Transverse colon (tissue), 4 donors: ENCODE measurements at regions of chr2 and their contacts with region 1.

Region 1: DNA sequence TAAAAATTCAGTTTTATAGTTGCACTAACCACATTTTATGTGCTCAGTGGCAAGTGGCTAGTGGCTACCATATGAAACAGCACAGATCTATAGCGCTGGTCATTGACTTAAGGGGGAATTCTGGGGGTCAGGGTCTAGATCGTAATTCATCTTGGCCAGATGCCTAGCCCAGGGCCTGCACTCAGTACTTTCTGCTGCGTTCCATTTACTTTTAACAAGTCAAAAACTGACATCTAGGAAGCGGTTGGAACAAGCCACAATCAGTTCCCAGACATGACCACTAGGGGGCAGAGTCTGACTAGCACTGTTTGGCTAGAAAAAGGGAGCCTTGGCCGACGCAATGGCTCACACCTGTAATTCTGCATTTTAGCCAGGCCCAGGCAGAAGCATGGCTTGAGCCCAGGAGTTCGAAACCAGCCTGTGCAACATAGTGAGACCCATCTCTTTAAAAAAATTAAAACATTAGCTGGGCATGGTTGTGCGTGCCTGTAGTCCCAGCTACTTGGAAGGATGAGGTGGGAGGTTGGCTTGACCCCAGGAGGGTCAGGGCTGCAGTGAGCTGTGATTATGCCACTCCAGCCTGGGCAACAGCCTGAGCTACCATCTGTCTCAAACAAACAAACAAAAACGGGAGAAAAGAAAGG is 9.0 kb upstream of the TMBIM1 start:
- DNase-seq: peak; percentile 93
- H3K4me3 ChIP-seq: no peak overlapping the region
- H3K27ac ChIP-seq: peak overlapping the region in 1 of 4 donors; percentile 33
- H3K4me1 ChIP-seq: peaks cover 0 to 7% (median 1%) of the 10 kb centered on the region in 4 donors
- H3K27me3 ChIP-seq: no peaks in the 10 kb centered on the region
- CTCF ChIP-seq: peak; percentile 96 to 98 (median 97)
- EP300 ChIP-seq: no peak
- POLR2A ChIP-seq: no peak

Region 2: GRCh38 chr2:218357236-218358159 is 56.2 kb after region 1 on chr2:
- in situ Hi-C with region 1: loop called in 2 of 4 experiments (anchors 5 kb)
- intact Hi-C with region 1: loop called (anchors 5 kb)
- DNase-seq: no peak
- H3K4me3 ChIP-seq: no peak overlapping the region
- H3K27ac ChIP-seq: no peak overlapping the region
- H3K4me1 ChIP-seq: peaks cover 0 to 8% (median 3%) of the 10 kb centered on the region in 4 donors
- H3K27me3 ChIP-seq: no peaks in the 10 kb centered on the region
- CTCF ChIP-seq: no peak
- EP300 ChIP-seq: no peak
- POLR2A ChIP-seq: no peak

Region 3: DNA sequence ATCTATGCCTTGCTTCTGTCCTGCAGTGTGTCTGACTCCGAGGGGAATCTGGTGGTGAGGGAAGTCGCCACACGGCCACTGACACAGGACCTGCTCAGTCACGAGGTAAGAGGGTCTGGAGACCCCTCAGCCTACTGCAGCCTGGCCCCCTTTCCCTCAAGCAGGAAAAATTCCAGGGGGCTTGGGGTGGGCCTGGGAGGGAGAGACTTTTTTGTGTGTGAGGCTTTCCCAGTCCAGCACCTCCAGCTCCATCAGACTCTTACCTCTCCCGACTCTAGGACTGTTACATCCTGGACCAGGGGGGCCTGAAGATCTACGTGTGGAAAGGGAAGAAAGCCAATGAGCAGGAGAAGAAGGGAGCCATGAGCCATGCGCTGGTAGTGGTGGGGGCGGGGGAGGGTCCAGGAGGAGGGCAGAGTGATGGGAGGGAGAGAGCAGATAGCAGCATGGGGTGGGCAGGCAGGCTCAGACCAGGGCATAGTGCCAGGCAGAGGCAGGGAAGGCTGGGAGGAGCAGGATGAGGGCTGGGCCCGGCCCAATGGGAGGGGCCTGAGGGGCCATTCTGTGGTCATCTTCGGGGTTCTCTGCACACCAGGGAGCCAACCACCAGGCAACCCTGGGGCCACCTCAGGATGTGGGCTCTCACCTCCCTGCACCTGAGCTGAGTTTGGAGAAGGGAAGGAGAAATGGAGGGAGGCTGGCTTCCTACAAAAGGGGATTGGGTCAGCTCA is 128.4 kb after region 1 on chr2:
- in situ Hi-C with region 1: no loop called
- intact Hi-C with region 1: no loop called
- DNase-seq: no peak
- H3K4me3 ChIP-seq: no peak overlapping the region
- H3K27ac ChIP-seq: no peak overlapping the region
- H3K4me1 ChIP-seq: no peaks in the 10 kb centered on the region
- H3K27me3 ChIP-seq: no peaks in the 10 kb centered on the region
- CTCF ChIP-seq: no peak
- EP300 ChIP-seq: no peak
- POLR2A ChIP-seq: no peak